Breast epithelium (tissue), 4 donors: ENCODE measurements at regions of chr11 and their contacts with region 1.

Region 1: GRCh38 chr11:41273908-41274307 is 185.5 kb downstream of the LRRC4C start:
- DNase-seq: no peak
- H3K4me3 ChIP-seq: no peak overlapping the region
- H3K27ac ChIP-seq: no peak overlapping the region
- H3K4me1 ChIP-seq: no peaks in the 10 kb centered on the region
- H3K27me3 ChIP-seq: no peaks in the 10 kb centered on the region
- CTCF ChIP-seq: no peak
- POLR2A ChIP-seq: no peak

Region 2: GRCh38 chr11:40168461-40168860 is 1105.4 kb before region 1 on chr11:
- intact Hi-C with region 1: loop called (anchors 5 kb)
- DNase-seq: no peak
- H3K4me3 ChIP-seq: no peak overlapping the region
- H3K27ac ChIP-seq: no peak overlapping the region
- H3K4me1 ChIP-seq: no peaks in the 10 kb centered on the region
- H3K27me3 ChIP-seq: no peaks in the 10 kb centered on the region
- CTCF ChIP-seq: no peak
- POLR2A ChIP-seq: no peak

Region 3: GRCh38 chr11:40573254-40573891 is 700.5 kb before region 1 on chr11:
- intact Hi-C with region 1: no loop called
- DNase-seq: no peak
- H3K4me3 ChIP-seq: no peak overlapping the region
- H3K27ac ChIP-seq: no peak overlapping the region
- H3K4me1 ChIP-seq: no peaks in the 10 kb centered on the region
- H3K27me3 ChIP-seq: no peaks in the 10 kb centered on the region
- CTCF ChIP-seq: no peak
- POLR2A ChIP-seq: no peak

Region 4: GRCh38 chr11:41323446-41323845 is 49.5 kb after region 1 on chr11:
- intact Hi-C with region 1: loop called (anchors 2 kb)
- DNase-seq: no peak
- H3K4me3 ChIP-seq: no peak overlapping the region
- H3K27ac ChIP-seq: no peak overlapping the region
- H3K4me1 ChIP-seq: no peaks in the 10 kb centered on the region
- H3K27me3 ChIP-seq: no peaks in the 10 kb centered on the region
- CTCF ChIP-seq: no peak
- POLR2A ChIP-seq: no peak